ENCODE measurements at regions of chr5 and their contacts with region 1.

Region 1: DNA sequence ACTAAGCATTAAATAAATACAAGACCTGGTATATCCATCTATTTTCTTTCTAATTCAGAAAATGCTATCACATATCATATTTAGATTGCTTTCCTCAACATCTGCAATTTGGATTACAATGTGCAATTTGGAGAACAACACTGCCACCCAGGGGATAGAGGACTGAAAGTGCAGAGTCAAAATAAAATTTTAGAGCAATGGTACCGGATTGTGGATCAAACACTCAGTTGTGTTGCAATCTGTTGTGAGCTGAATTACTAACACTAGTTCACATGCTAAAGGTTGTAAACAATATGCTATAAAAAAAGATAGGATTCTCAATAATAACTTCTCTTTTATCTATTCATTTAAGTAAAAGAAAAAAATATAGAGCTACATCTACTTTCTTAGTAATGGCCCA is 11.9 kb upstream of the SRFBP1 start:
- DNase-seq: peak; percentile 29
- ATAC-seq: peak; percentile 69
- H3K4me3 ChIP-seq: no peak overlapping the region
- H3K27ac ChIP-seq: no peak overlapping the region
- H3K4me1 ChIP-seq: no peaks in the 10 kb centered on the region
- H3K27me3 ChIP-seq: no peaks in the 10 kb centered on the region
- CTCF ChIP-seq: peak; percentile 53 to 75 (median 57); a peak in 5 of 6 replicates
- POLR2A ChIP-seq: no peak
- RAD21 ChIP-seq: peak; percentile 87

Region 2: GRCh38 chr5:120463991-120464626 is 1485.8 kb before region 1 on chr5 and contains the start of gene PRR16:
- CTCF ChIA-PET with region 1: no interaction called
- POLR2A ChIA-PET with region 1: no interaction called
- RAD21 ChIA-PET with region 1: no interaction called
- intact Hi-C with region 1: loop called (anchors 10 kb)
- DNase-seq: no peak
- ATAC-seq: peak; percentile 98
- H3K4me3 ChIP-seq: peak within 1 kb of the TSS; percentile 35 to 54
- H3K27ac ChIP-seq: no peak within 1 kb of the TSS
- H3K4me1 ChIP-seq: peaks cover 0 to 4% of the 10 kb centered on the region in 2 experiments; a peak in 1 of 4 replicates
- H3K27me3 ChIP-seq: no peaks in the 10 kb centered on the region
- CTCF ChIP-seq: no peak
- POLR2A ChIP-seq: no peak
- RAD21 ChIP-seq: no peak
- total RNA-seq, gene PRR16: 0.42 TPM

Region 3: DNA sequence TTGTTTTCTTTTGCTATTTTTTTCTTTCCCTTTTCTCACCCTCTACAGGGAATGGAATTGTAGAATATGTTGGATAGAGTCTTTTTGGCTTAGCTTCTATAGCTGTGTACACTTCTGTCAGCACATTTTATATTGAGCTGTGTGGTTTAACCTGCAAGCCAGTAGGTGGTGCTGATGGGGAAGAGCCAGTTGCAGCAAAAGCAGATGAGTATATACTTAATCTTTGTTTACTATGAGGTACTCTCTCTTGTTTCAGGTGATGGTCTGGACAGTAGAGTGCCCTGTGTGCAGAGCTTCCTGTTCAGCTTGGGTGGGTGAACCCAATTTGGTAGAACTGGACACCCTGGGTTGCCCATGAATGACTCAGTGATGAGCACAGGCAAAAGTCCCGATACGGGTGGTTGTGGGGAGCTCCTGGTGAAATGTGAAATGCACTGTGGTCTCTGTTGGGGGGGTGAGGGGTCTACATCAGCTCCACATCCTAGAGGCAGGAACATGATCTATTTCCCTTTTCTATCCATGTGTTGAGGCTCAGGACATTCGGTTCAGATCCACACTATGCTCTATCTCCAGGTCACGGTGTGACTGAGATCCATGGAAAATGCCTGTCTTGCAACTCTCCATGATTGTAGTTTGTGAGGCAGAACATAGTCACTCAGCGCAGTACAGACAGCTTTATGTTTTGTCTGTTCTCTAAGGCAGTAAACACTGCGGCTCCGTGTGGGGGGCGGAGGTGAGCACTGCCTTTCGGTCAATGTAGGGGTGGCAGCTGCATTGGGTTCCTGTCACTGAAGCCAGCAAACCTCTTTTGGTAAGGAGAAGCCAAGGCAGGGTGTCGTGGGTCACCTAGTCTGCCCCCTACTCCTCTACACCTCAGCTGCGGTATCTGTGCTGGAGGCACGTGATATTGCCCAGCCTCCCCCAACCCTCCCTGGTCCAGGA is 1132.6 kb before region 1 on chr5:
- CTCF ChIA-PET with region 1: interaction called, 8 read pairs
- POLR2A ChIA-PET with region 1: no interaction called
- RAD21 ChIA-PET with region 1: no interaction called
- intact Hi-C with region 1: loop called (anchors 5 kb)
- DNase-seq: no peak
- ATAC-seq: peak; percentile 88
- H3K4me3 ChIP-seq: no peak overlapping the region
- H3K27ac ChIP-seq: no peak overlapping the region
- H3K4me1 ChIP-seq: no peaks in the 10 kb centered on the region
- H3K27me3 ChIP-seq: no peaks in the 10 kb centered on the region
- CTCF ChIP-seq: peak in 2 of 3 experiments; percentile 56 to 64; a peak in 4 of 6 replicates
- POLR2A ChIP-seq: no peak
- RAD21 ChIP-seq: peak; percentile 54

Measured in HCT116 (cell line).